Endothelial cell of umbilical vein (primary cell): ENCODE measurements at regions of chr3 and their contacts with region 1.

Region 1: DNA sequence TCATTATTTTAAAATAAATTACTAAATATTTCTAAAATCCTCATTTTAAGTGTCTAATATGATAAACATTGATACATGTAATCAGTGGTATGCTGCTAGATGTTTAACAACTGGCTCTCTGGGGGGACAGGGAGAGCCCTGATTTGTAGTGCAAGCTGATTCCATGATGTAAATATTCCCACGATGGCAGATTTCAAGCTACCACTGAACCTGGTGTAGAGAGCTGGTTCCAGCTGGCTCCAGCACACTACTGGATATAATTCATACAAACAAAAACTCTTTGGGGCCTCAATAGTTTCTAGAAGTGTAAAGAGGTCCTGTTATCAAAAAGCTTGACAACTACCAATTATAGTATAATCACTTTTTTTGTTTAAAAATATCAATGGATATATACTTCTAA is 316.2 kb downstream of the SLC9A9 start:
- DNase-seq: no peak
- H3K4me3 ChIP-seq: no peak overlapping the region
- H3K27ac ChIP-seq: no peak overlapping the region
- H3K4me1 ChIP-seq: no peaks in the 10 kb centered on the region
- H3K27me3 ChIP-seq: no peaks in the 10 kb centered on the region
- CTCF ChIP-seq: no peak
- POLR2A ChIP-seq: no peak

Region 2: GRCh38 chr3:143573610-143574303 is 41.7 kb after region 1 on chr3:
- CTCF ChIA-PET with region 1: no interaction called
- POLR2A ChIA-PET with region 1: no interaction called
- dilution Hi-C with region 1: no loop called
- intact Hi-C with region 1: loop called (anchors 2 kb)
- DNase-seq: peak; percentile 47
- H3K4me3 ChIP-seq: no peak overlapping the region
- H3K27ac ChIP-seq: no peak overlapping the region
- H3K4me1 ChIP-seq: peaks cover 18% of the 10 kb centered on the region
- H3K27me3 ChIP-seq: no peaks in the 10 kb centered on the region
- CTCF ChIP-seq: no peak
- POLR2A ChIP-seq: no peak

Region 3: DNA sequence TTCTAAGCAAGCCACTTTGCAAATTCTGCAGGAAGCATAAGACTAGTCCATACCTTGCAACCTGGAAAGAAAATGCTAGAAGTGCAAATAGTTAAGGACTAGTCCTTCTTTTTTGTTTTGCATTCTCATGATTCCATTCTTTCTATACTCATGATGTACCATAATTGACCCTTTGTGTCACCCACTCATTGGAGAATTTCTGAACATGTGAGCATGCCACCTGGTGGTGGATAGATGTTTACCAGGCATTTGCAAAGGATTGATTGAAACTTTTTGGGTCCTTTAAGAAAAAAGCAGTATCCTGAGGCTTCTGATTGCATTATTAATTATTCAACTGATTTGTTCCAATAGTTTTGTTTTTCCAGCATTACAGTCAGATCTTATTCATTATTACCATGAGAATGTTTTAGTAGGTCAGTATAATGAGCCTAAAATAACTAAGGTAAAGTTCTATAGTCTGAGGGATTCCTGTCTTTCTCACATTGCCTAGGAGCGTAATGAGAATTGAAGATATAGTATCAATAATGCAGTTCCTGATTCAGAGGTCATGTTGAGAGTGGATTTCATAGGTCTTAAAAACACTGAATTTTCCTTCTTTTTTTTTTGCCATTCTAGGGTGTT is 419.4 kb after region 1 on chr3:
- CTCF ChIA-PET with region 1: no interaction called
- POLR2A ChIA-PET with region 1: no interaction called
- dilution Hi-C with region 1: no loop called
- intact Hi-C with region 1: no loop called
- DNase-seq: peak; percentile 49
- H3K4me3 ChIP-seq: no peak overlapping the region
- H3K27ac ChIP-seq: no peak overlapping the region
- H3K4me1 ChIP-seq: no peaks in the 10 kb centered on the region
- H3K27me3 ChIP-seq: no peaks in the 10 kb centered on the region
- CTCF ChIP-seq: peak; percentile 42 to 54
- POLR2A ChIP-seq: no peak